Activated CD4-positive, alpha-beta memory T cell treated with anti-CD3 and anti-CD28 coated beads for 36 hours (primary cell): ENCODE measurements at regions of chr12 and their contacts with region 1.

Region 1: DNA sequence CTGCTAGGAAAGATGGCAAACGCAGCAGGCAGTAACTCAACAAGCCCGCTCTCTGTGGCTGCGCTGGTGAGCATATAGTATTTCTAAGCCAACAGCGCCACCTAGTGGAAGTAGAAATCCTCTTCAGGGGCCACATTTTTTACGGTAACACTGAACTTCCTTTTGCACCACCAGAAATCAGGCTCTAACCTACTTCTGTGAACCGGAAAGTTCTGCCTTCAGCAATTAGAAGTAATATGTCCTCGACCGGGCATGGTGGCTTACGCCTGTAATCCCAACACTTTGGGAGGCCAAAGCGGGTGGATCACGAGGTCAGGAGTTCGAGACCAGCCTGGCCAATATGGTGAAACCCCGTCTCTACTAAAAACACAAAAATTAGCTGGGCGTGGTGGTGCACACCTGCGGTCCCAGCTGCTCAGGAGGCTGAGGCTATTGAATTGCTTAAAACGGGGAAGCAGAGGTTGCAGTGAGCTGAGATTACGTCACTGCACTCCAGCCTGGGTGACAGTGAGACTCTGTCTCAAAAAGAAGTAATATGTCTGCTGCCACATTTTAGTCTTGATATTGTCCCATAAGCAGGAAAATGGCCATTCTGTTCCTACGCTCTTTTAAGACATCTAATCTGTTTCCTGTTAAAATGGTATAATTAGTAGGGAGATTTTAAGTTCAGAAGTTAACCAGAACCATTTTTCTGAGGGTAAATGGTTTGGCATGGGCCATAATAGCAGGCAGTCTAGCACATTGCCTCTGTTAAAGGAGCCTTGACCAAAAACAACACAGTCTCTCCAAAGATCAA is 26.8 kb downstream of the APOBEC1 start:
- DNase-seq: peak; percentile 79
- H3K4me3 Mint-ChIP-seq: peak overlapping the region; percentile 77
- H3K27ac Mint-ChIP-seq: peak overlapping the region; percentile 83
- H3K4me1 Mint-ChIP-seq: peaks cover 30% of the 10 kb centered on the region
- H3K27me3 Mint-ChIP-seq: peaks cover 1% of the 10 kb centered on the region

Region 2: GRCh38 chr12:7142056-7142644 is 496.8 kb before region 1 on chr12:
- CTCF ChIA-PET with region 1: interaction called, 10 read pairs
- POLR2A ChIA-PET with region 1: no interaction called
- intact Hi-C with region 1: no loop called
- DNase-seq: peak; percentile 70
- H3K4me3 Mint-ChIP-seq: no peak overlapping the region
- H3K27ac Mint-ChIP-seq: no peak overlapping the region
- H3K4me1 Mint-ChIP-seq: peaks cover 6% of the 10 kb centered on the region
- H3K27me3 Mint-ChIP-seq: no peaks in the 10 kb centered on the region

Region 3: GRCh38 chr12:7460375-7461259 is 178.3 kb before region 1 on chr12:
- CTCF ChIA-PET with region 1: interaction called, 3 read pairs
- POLR2A ChIA-PET with region 1: no interaction called
- intact Hi-C with region 1: loop called (anchors 2 kb)
- DNase-seq: peak; percentile 67
- H3K4me3 Mint-ChIP-seq: no peak overlapping the region
- H3K27ac Mint-ChIP-seq: no peak overlapping the region
- H3K4me1 Mint-ChIP-seq: no peaks in the 10 kb centered on the region
- H3K27me3 Mint-ChIP-seq: peaks cover 3% of the 10 kb centered on the region

Region 4: DNA sequence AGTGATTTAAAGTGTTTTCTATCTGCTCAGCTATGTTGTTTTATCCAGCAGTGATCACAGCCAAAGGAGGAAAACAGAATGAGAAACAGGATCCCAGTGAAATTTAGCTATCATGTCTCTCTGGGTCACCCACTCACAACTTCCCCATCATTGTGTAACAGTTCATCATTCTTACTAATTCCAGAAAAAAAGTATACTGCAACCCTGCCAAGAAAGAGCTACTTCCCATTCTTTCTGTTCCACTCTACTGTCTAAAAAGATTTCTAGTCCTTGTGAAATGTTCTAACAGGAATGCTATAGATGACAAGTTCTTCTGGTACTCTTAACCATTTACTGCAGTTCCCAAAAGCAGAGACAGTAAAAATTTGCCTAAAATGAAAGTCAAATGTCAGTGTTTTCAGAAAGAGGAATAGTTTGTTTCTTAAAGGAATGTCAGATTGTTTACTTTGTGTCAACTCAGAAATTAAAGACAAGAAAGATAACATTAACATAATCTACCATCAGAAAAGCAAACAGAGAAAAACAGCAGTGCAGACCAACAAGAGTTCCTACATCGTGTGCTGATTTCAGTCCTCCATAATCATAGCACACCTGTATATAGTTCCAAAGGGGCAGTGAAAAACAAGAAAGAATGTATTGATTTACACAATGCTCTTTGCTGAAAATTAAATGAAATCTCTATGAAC is 96.0 kb before region 1 on chr12:
- CTCF ChIA-PET with region 1: no interaction called
- POLR2A ChIA-PET with region 1: no interaction called
- intact Hi-C with region 1: no loop called
- DNase-seq: no peak
- H3K4me3 Mint-ChIP-seq: no peak overlapping the region
- H3K27ac Mint-ChIP-seq: no peak overlapping the region
- H3K4me1 Mint-ChIP-seq: no peaks in the 10 kb centered on the region
- H3K27me3 Mint-ChIP-seq: peaks cover 35% of the 10 kb centered on the region

Region 5: GRCh38 chr12:7695237-7696197 is 56.6 kb after region 1 on chr12 and contains the start of gene GDF3:
- CTCF ChIA-PET with region 1: no interaction called
- POLR2A ChIA-PET with region 1: no interaction called
- intact Hi-C with region 1: no loop called
- DNase-seq: no peak
- H3K4me3 Mint-ChIP-seq: no peak within 1 kb of the TSS
- H3K27ac Mint-ChIP-seq: no peak within 1 kb of the TSS
- H3K4me1 Mint-ChIP-seq: peaks cover 8% of the 10 kb centered on the region
- H3K27me3 Mint-ChIP-seq: peaks cover 3% of the 10 kb centered on the region
- total RNA-seq, gene GDF3: not detected

Region 6: DNA sequence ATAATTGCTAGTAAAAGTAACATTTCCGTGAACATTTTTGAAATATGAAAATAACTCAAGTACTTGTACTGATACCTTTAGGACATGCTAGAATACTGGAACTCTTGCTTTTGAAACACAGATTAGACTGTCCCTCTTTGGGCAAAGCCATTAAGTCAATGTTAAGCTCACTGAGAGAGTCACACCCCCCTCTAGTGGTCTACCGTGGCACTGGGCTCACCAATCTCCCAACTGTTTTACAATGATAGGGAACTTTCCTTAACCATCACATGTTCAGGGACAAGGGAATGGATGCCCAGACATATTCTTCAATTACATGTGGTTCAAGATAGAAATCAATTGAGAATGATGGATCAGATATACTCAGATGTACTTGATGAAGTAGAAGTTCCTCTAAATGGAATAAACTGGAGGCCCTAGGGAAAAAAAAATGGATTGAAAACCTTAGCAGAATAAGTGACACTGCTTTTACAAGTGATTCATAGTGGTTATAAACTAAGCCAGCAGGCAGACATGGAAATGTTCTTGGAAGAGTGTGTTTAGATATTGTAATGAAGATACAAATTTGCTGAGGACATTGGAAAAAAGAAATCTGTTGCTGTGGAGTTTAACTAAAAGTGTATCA is 168.0 kb after region 1 on chr12:
- CTCF ChIA-PET with region 1: interaction called, 69 read pairs
- POLR2A ChIA-PET with region 1: no interaction called
- intact Hi-C with region 1: loop called (anchors 10 kb)
- DNase-seq: peak; percentile 73
- H3K4me3 Mint-ChIP-seq: no peak overlapping the region
- H3K27ac Mint-ChIP-seq: no peak overlapping the region
- H3K4me1 Mint-ChIP-seq: no peaks in the 10 kb centered on the region
- H3K27me3 Mint-ChIP-seq: peaks cover 3% of the 10 kb centered on the region

Region 7: DNA sequence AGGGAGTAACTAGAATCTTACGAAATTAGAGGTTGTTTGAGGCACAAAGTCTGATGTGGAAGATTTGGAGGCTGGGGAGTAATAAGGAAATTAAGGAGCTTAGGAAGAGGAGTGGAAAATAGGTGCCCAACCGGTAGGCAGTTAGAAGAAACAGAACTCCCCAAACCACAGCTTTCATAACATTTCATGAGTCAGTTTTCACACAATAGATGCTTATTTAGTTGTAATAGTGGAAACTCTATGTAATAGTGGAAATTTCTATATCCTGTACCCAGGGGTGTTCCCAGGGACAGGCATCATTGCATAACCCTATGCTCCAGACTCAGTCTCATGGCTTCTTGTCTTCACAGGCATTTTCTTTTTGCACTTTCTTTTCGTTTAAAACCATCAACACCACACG is 418.9 kb after region 1 on chr12:
- CTCF ChIA-PET with region 1: no interaction called
- POLR2A ChIA-PET with region 1: no interaction called
- intact Hi-C with region 1: no loop called
- DNase-seq: no peak
- H3K4me3 Mint-ChIP-seq: no peak overlapping the region
- H3K27ac Mint-ChIP-seq: no peak overlapping the region
- H3K4me1 Mint-ChIP-seq: peaks cover 16% of the 10 kb centered on the region
- H3K27me3 Mint-ChIP-seq: no peaks in the 10 kb centered on the region